ENCODE measurements at regions of chr3 and their contacts with region 1.

Region 1: GRCh38 chr3:50358911-50359759 is at the start of gene TMEM115:
- DNase-seq: peak; percentile 93 to 99
- ATAC-seq: peak; percentile 96 to 99 (median 97)
- H3K4me3 ChIP-seq: peak within 1 kb of the TSS; percentile 76 to 100 (median 91)
- H3K27ac ChIP-seq: peak within 1 kb of the TSS; percentile 88 to 98 (median 94)
- H3K4me1 ChIP-seq: peaks cover 28 to 49% (median 42%) of the 10 kb centered on the region in 9 donors
- H3K27me3 ChIP-seq: no peaks in the 10 kb centered on the region
- CTCF ChIP-seq: no peak
- total RNA-seq, gene TMEM115: 18.7 to 32.8 (median 24.2) TPM

Region 2: GRCh38 chr3:50390508-50391224 is 31.5 kb after region 1 on chr3:
- intact Hi-C with region 1: loop called in 1 of 10 experiments (anchors 1 kb)
- DNase-seq: peak; percentile 68 to 79
- ATAC-seq: peak; percentile 69 to 90 (median 80)
- H3K4me3 ChIP-seq: no peak overlapping the region
- H3K27ac ChIP-seq: peak overlapping the region in 6 of 10 donors; percentile 47 to 73 (median 56)
- H3K4me1 ChIP-seq: peaks cover 9 to 33% (median 26%) of the 10 kb centered on the region in 9 donors
- H3K27me3 ChIP-seq: no peaks in the 10 kb centered on the region
- CTCF ChIP-seq: no peak

Region 3: GRCh38 chr3:50418850-50419249 is 59.7 kb after region 1 on chr3:
- intact Hi-C with region 1: no loop called
- DNase-seq: no peak
- ATAC-seq: no peak
- H3K4me3 ChIP-seq: no peak overlapping the region
- H3K27ac ChIP-seq: no peak overlapping the region
- H3K4me1 ChIP-seq: no peaks in the 10 kb centered on the region
- H3K27me3 ChIP-seq: no peaks in the 10 kb centered on the region
- CTCF ChIP-seq: no peak

Region 4: GRCh38 chr3:50525987-50526386 is 166.9 kb after region 1 on chr3:
- intact Hi-C with region 1: no loop called
- DNase-seq: no peak
- ATAC-seq: peak in 6 of 8 donors; percentile 37 to 76 (median 58)
- H3K4me3 ChIP-seq: no peak overlapping the region
- H3K27ac ChIP-seq: no peak overlapping the region
- H3K4me1 ChIP-seq: no peaks in the 10 kb centered on the region
- H3K27me3 ChIP-seq: peaks cover 0 to 24% (median 12%) of the 10 kb centered on the region in 7 donors
- CTCF ChIP-seq: no peak

Measured in heart right ventricle (tissue), 16 donors.